Aorta (tissue), 5 donors: ENCODE measurements at regions of chr16 and their contacts with region 1.

Region 1: DNA sequence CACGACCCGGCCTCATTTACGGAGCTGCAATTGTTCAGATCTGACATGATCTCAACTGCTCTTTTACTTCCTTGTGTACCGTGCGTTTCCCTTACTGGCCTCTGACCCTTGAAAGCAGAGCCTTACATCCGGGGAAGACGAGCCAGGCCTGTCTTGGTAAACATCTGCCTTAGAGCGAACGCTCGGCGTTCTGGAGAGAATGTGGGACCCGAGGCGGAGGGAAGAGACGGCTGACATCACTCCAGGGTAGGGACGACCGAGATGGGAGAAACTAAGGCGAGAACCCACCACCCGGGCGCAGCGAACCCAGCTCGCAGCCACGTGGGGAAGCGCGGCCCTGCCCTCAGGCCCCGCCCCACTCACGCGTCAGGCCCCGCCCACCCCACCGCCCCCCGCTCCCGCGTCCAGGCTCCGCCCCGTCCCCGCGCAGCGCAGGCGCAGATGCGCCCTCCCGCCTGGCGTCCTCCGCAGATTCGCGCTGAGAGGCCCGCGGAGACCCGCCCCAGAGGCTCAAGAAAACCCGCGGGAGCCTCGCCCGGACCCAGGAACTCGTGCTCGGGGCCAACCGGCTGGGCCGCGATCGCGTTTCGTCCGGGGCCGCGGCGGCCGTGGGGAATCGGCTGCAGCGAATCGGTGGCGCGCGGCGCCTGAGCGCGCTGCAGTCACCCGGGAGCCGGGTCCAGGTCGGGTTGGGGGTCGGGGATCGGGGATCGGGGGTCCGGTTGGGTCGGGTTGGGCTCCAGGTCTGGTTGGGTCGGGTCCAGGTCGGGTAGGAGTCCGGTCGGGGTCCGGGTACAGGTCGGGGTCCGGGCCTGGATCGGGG is at the start of gene TELO2:
- DNase-seq: peak; percentile 87 to 95
- ATAC-seq: peak; percentile 91
- H3K4me3 ChIP-seq: peak within 1 kb of the TSS; percentile 66 to 74
- H3K27ac ChIP-seq: peak within 1 kb of the TSS in 1 of 2 donors; percentile 22
- H3K4me1 ChIP-seq: no peaks in the 10 kb centered on the region
- H3K27me3 ChIP-seq: no peaks in the 10 kb centered on the region
- total RNA-seq, gene TELO2: 25.6 to 28.2 TPM

Region 2: DNA sequence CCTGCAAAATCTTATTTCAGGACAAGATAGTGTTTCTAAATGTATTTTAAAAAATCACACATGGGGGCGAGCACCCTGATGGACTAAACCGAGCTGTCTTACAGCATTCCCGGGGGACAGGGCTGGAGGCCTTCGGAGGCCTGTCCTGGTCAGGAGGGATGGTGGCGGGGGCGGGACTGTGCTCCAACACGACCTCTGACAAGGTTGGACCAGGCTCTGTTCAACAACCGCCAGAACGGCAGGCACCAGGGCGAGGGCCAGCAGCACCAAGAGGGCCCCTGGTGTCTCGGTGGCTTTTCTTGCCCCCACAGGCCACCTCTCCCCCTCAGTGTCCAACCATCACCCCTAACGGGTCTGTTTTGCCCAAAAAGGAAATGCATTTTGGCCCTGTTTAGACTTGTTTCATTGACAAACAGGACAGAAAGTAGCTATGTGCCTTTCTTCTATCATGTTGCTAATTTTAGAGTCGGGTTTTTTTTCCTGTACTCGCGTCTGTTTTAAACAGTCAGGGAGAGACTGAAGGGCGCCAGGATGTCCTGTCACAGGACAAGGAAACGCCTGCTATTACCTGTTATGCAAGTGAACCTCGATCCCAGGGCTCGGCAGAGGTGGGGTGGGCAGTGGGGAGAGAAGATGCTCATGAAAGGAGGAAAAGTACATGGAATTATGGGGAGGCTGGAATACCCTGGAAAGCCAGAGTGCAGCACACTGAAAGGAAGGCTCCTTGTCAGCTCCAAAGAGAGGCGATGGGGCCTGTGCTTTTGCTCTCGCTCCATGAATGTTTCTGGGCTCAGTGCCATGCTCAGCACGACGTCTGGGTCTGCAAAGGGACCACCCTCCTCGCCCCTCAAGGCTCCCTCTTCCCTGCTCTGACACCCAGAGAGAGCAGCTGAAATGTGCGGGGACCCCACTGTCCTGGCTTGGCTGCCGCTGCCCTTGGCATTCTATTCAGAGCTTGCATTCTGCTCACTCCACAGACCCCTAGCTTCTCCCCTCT is 52.2 kb after region 1 on chr16:
- intact Hi-C with region 1: loop called (anchors 5 kb)
- DNase-seq: no peak
- ATAC-seq: peak; percentile 44
- H3K4me3 ChIP-seq: no peak overlapping the region
- H3K27ac ChIP-seq: peak overlapping the region; percentile 74 to 77
- H3K4me1 ChIP-seq: peaks cover 0 to 2% of the 10 kb centered on the region in 2 donors
- H3K27me3 ChIP-seq: no peaks in the 10 kb centered on the region

Region 3: GRCh38 chr16:1564325-1564724 is 71.2 kb after region 1 on chr16:
- intact Hi-C with region 1: loop called in 1 of 2 experiments (anchors 1 kb)
- DNase-seq: no peak
- ATAC-seq: no peak
- H3K4me3 ChIP-seq: no peak overlapping the region
- H3K27ac ChIP-seq: no peak overlapping the region
- H3K4me1 ChIP-seq: no peaks in the 10 kb centered on the region
- H3K27me3 ChIP-seq: no peaks in the 10 kb centered on the region

Region 4: DNA sequence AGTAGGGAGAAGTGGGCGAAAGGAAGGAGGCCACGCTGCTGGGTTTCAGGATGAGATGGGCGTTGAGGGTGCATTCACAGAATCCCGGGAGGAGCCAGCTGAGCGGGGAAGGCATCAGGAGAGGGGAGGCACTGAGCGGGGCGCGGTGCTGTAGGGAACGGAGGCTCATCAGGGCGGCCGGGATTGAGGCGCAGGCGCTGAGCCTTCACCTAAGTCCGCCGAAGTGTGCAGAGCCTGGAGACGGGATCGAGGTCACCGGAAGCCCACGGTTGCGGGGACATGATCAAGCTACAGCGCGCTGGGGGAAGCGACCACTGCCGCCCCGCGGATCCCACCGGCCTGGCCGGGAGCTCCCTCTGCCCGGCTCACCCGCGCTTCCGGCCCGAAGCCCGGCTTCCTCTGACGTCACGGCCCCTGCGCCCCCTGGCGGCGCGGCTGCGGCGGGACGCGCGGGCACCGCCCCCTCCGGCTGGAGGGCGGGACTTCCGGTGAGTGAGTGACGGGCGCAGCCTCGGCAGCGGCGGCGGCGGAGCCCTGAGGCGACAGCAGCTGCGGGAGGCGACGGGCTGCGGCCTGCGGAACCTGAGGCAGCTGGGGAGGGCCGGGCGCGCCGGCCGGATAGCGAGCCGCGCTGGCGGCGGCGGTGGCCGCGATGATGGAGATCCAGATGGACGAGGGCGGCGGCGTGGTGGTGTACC is 212.7 kb after region 1 on chr16 and contains the start of gene MAPK8IP3:
- intact Hi-C with region 1: loop called in 1 of 2 experiments (anchors 5 kb)
- DNase-seq: peak; percentile 93 to 97
- ATAC-seq: peak; percentile 96
- H3K4me3 ChIP-seq: peak within 1 kb of the TSS; percentile 65 to 71
- H3K27ac ChIP-seq: peak within 1 kb of the TSS in 1 of 2 donors; percentile 92
- H3K4me1 ChIP-seq: no peaks in the 10 kb centered on the region
- H3K27me3 ChIP-seq: no peaks in the 10 kb centered on the region
- total RNA-seq, gene MAPK8IP3: 69.0 to 122 TPM